PC-3 (cell line): ENCODE measurements at regions of chrX and their contacts with region 1.

Region 1: DNA sequence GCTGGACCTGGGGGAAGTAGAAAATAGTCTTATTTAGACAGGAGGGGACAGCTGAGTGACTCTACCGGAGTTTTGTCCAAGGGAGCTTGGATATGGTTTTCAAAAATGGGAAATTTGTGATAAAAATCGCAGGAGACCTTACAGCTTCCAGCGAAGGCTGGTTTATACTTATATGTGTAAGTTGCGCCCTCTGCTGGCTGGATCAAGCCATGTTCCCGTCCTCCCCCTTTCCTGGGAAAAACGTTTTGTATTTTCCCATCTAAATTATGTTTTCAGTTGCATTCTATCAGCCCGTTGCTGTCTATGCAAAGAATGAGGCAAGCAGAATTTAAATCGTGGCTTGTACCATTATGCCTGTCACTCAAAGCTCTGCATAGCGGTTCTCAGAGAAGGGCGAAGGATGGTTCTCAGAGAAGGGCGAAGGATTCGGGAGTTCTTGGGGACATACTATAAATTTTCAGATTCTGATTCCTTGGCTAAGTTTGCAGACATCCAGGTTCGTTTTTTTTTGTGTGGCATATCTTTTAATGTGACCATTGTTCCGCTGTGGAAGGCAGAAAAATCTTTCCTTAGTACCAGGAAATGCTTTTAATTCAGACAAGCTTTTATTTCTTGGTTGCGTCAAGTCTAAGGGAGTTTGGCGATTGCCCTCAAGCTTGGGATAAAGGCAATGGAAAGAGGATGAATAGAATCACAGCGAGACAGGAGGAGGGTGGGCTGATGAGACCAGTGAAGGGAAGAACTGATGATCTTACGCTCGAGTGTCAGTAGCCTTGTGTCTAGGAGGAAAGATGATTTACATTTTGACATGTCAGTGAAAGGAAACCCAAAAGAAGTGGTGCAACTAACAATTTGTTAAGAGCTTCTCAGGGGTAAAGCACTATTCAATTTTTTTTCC is 128.5 kb upstream of the ARX start:
- DNase-seq: peak; percentile 60
- ATAC-seq: peak; percentile 67
- H3K4me3 ChIP-seq: no peak overlapping the region
- H3K27ac ChIP-seq: no peak overlapping the region
- H3K4me1 ChIP-seq: no peaks in the 10 kb centered on the region
- H3K27me3 ChIP-seq: no peaks in the 10 kb centered on the region
- CTCF ChIP-seq: peak; percentile 83

Region 2: DNA sequence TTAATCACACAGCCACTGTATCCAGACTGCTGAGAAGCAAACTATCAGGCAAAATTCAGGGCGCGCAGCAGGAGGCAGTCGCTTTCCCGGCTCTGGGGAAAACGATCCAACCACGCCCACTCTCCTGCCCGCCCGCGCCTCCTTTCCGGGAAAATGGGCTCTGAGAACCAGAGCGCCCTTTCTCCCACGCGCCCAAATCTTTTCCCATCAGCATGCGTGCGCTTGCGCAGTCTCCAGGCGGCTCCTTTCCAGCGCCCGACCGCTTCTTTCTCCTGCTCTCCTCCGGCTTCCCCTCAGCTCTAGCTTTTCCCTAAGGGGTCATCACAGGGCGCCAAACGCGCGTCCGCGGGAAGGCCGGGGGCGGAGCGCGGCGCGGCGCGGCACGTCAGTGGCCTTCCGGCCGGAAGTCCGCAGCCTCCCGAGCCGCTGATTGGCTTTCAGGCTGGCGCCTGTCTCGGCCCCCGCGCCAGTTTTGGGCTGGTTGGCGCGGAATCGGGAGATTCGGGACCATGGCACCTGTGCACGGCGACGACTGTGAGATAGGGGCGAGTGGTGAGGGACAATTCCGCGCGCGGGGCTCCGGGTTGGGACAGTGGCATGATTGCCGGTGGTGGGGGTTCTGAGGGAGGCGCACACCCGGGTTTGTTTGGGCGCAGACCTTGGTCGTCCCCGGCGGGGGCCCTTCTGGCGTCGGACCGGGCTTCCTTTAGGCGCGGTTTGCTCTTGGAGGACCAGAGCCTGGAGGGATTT is 450.7 kb before region 1 on chrX and contains the start of gene POLA1:
- CTCF ChIA-PET with region 1: no interaction called
- POLR2A ChIA-PET with region 1: no interaction called
- intact Hi-C with region 1: no loop called
- DNase-seq: peak; percentile 95
- ATAC-seq: peak; percentile 95
- H3K4me3 ChIP-seq: peak within 1 kb of the TSS; percentile 90
- H3K27ac ChIP-seq: peak within 1 kb of the TSS; percentile 34; the same call in 1 of the 2 replicates
- H3K4me1 ChIP-seq: peaks cover 12% of the 10 kb centered on the region
- H3K27me3 ChIP-seq: no peaks in the 10 kb centered on the region
- CTCF ChIP-seq: peak; percentile 46; the same call in 1 of the 2 replicates
- total RNA-seq, gene POLA1: 19.6 and 23.2 TPM in 2 replicates

Region 3: GRCh38 chrX:24748202-24748843 is 396.0 kb before region 1 on chrX:
- CTCF ChIA-PET with region 1: no interaction called
- POLR2A ChIA-PET with region 1: no interaction called
- intact Hi-C with region 1: loop called (anchors 1 kb)
- DNase-seq: peak; percentile 2
- ATAC-seq: no peak
- H3K4me3 ChIP-seq: no peak overlapping the region
- H3K27ac ChIP-seq: no peak overlapping the region
- H3K4me1 ChIP-seq: no peaks in the 10 kb centered on the region
- H3K27me3 ChIP-seq: no peaks in the 10 kb centered on the region
- CTCF ChIP-seq: no peak

Region 4: GRCh38 chrX:25004485-25005032 is 139.7 kb before region 1 on chrX:
- CTCF ChIA-PET with region 1: no interaction called
- POLR2A ChIA-PET with region 1: no interaction called
- intact Hi-C with region 1: loop called (anchors 5 kb)
- DNase-seq: no peak
- ATAC-seq: peak; percentile 47
- H3K4me3 ChIP-seq: peak overlapping the region; percentile 51
- H3K27ac ChIP-seq: no peak overlapping the region
- H3K4me1 ChIP-seq: peaks cover 8% of the 10 kb centered on the region; the same call in 1 of the 2 replicates
- H3K27me3 ChIP-seq: peaks cover 64% of the 10 kb centered on the region
- CTCF ChIP-seq: no peak